H1 (cell line): ENCODE measurements at regions of chr19 and their contacts with region 1.

Region 1: DNA sequence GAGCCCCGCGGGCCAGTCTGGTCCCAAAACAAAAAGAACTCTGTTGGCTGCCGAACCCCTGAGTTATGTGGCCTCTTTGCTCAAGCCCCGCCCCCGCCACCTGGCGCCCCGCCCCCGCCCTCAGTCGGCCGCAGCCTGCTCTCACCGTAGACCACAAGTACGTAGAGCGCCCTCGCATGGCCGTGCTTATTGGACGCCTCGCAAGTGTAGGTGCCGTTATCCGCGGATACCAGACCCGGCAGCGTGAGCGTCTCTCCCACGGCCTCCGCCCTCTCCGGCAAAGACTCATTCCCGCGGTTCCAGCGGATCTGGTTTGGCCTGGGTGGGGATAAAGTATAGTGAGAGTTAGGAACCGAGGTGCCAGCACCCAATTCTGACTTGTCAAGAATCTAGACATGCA is 5.5 kb upstream of the ZNF428 start:
- DNase-seq: peak in 1 of 2 experiments; percentile 96
- H3K4me3 ChIP-seq: no peak overlapping the region
- H3K27ac ChIP-seq: no peak overlapping the region
- H3K4me1 ChIP-seq: peaks cover 2 to 9% (median 8%) of the 10 kb centered on the region in 4 experiments; a peak in 5 of 7 replicates
- H3K27me3 ChIP-seq: no peaks in the 10 kb centered on the region
- CTCF ChIP-seq: peak; percentile 68 to 91 (median 78)
- EP300 ChIP-seq: no peak
- POLR2A ChIP-seq: no peak
- RAD21 ChIP-seq: peak; percentile 48 to 65

Region 2: DNA sequence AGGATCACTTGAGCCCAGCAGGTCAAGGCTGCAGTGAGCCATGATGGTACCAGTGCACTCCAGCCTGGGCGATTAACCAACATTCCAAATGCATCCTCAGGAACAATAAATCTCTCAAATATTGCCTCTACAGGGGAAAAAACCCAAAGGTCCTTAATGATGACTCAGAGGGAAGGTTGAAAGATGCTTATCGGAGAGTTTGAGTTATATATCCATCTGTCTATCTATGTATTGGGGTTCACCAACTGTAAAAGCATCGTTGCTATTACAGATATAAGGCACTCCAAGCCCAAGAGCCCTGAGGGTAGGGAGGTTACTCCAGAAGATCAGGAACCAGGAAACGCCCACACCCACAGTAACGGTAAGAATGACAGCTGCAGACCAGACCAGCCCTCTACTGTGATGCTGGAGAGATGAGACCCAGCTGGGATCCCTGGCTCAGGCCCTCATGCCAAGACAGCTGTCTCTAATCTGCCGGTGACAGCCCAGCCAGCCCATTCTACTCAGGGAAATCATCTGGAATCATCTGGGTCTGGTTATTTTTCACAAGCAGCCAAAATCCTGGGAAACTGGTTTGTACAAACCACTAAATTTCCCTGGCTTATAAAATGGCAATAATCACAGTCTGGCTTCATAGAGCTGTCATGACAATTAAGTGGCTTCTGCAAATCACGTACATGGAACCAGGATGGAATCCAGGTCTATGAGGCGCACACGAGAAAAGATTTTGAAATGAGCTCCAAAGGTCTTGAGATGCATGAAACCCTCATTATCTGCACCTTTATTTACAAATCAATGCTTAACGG is 186.4 kb before region 1 on chr19:
- CTCF ChIA-PET with region 1: no interaction called
- POLR2A ChIA-PET with region 1: no interaction called
- DNase-seq: no peak
- H3K4me3 ChIP-seq: no peak overlapping the region
- H3K27ac ChIP-seq: no peak overlapping the region
- H3K4me1 ChIP-seq: no peaks in the 10 kb centered on the region
- H3K27me3 ChIP-seq: no peaks in the 10 kb centered on the region
- CTCF ChIP-seq: no peak
- EP300 ChIP-seq: no peak
- POLR2A ChIP-seq: no peak
- RAD21 ChIP-seq: no peak

Region 3: GRCh38 chr19:43555185-43555770 is 69.7 kb before region 1 on chr19:
- CTCF ChIA-PET with region 1: interaction called, 11 read pairs
- POLR2A ChIA-PET with region 1: no interaction called
- DNase-seq: peak; percentile 61 to 95
- H3K4me3 ChIP-seq: no peak overlapping the region
- H3K27ac ChIP-seq: no peak overlapping the region
- H3K4me1 ChIP-seq: 0 out of 7 replicates have a peak, but pooled peaks cover 0 to 2% (median 0%) of the 10 kb centered on the region in 4 experiments
- H3K27me3 ChIP-seq: no peaks in the 10 kb centered on the region
- CTCF ChIP-seq: peak; percentile 85 to 98 (median 93)
- EP300 ChIP-seq: no peak
- POLR2A ChIP-seq: no peak
- RAD21 ChIP-seq: peak; percentile 68 to 81

Region 4: GRCh38 chr19:43634872-43635560 is 10.1 kb after region 1 on chr19:
- CTCF ChIA-PET with region 1: interaction called, 22 read pairs
- POLR2A ChIA-PET with region 1: interaction called, 9 read pairs
- DNase-seq: peak in 1 of 2 experiments; percentile 68
- H3K4me3 ChIP-seq: peak overlapping the region; percentile 43 to 66 (median 59)
- H3K27ac ChIP-seq: no peak overlapping the region
- H3K4me1 ChIP-seq: peaks cover 9 to 25% (median 18%) of the 10 kb centered on the region in 4 experiments
- H3K27me3 ChIP-seq: peaks cover 5 to 28% (median 17%) of the 10 kb centered on the region in 4 experiments
- CTCF ChIP-seq: no peak
- EP300 ChIP-seq: no peak
- POLR2A ChIP-seq: peak in 1 of 2 experiments; percentile 28; a peak in 2 of 3 replicates
- RAD21 ChIP-seq: no peak

Region 5: GRCh38 chr19:43641333-43641732 is 16.4 kb after region 1 on chr19:
- CTCF ChIA-PET with region 1: interaction called, 22 read pairs
- POLR2A ChIA-PET with region 1: interaction called, 7 read pairs
- DNase-seq: no peak
- H3K4me3 ChIP-seq: no peak overlapping the region
- H3K27ac ChIP-seq: no peak overlapping the region
- H3K4me1 ChIP-seq: peaks cover 3 to 14% (median 10%) of the 10 kb centered on the region in 4 experiments; a peak in 6 of 7 replicates
- H3K27me3 ChIP-seq: peaks cover 11 to 48% (median 29%) of the 10 kb centered on the region in 4 experiments
- CTCF ChIP-seq: no peak
- EP300 ChIP-seq: no peak
- POLR2A ChIP-seq: no peak
- RAD21 ChIP-seq: no peak

Region 6: GRCh38 chr19:43651758-43652545 is 27.0 kb after region 1 on chr19:
- CTCF ChIA-PET with region 1: interaction called, 13 read pairs
- POLR2A ChIA-PET with region 1: no interaction called
- DNase-seq: peak in 1 of 2 experiments; percentile 80
- H3K4me3 ChIP-seq: no peak overlapping the region
- H3K27ac ChIP-seq: no peak overlapping the region
- H3K4me1 ChIP-seq: no peaks in the 10 kb centered on the region; a peak in 1 of 7 replicates
- H3K27me3 ChIP-seq: no peaks in the 10 kb centered on the region
- CTCF ChIP-seq: peak; percentile 84 to 92 (median 86)
- EP300 ChIP-seq: no peak
- POLR2A ChIP-seq: no peak
- RAD21 ChIP-seq: peak; percentile 81 to 87

Region 7: DNA sequence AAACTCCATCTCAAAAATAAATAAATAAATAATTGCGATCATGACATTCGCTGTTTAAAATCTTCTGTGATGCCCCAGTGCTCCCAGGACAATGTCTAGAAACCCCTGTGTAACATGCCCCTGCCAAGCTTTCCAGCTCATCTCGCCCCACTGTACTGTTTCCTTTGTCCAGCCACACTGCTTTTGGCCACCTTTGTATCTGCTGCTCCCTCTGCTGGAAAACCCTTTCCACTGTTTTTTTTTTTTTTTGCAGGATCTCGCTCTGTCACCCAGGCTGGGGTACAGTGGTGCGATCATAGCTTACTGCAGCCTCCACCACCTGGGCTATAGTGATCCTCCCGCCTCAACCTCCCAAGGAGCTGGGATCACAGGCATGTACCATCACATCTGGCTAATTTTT is 37.6 kb after region 1 on chr19:
- CTCF ChIA-PET with region 1: interaction called, 13 read pairs
- POLR2A ChIA-PET with region 1: interaction called, 3 read pairs
- DNase-seq: peak in 1 of 2 experiments; percentile 46
- H3K4me3 ChIP-seq: no peak overlapping the region
- H3K27ac ChIP-seq: no peak overlapping the region
- H3K4me1 ChIP-seq: peaks cover 0 to 6% (median 4%) of the 10 kb centered on the region in 4 experiments; a peak in 4 of 7 replicates
- H3K27me3 ChIP-seq: no peaks in the 10 kb centered on the region
- CTCF ChIP-seq: peak; percentile 27 to 57 (median 40)
- EP300 ChIP-seq: no peak
- POLR2A ChIP-seq: no peak
- RAD21 ChIP-seq: peak; percentile 28 to 41

Region 8: GRCh38 chr19:43687660-43687997 is 62.7 kb after region 1 on chr19:
- CTCF ChIA-PET with region 1: no interaction called
- POLR2A ChIA-PET with region 1: no interaction called
- DNase-seq: no peak
- H3K4me3 ChIP-seq: no peak overlapping the region
- H3K27ac ChIP-seq: no peak overlapping the region
- H3K4me1 ChIP-seq: peaks cover 0 to 2% (median 0%) of the 10 kb centered on the region in 4 experiments; a peak in 2 of 7 replicates
- H3K27me3 ChIP-seq: no peaks in the 10 kb centered on the region
- CTCF ChIP-seq: no peak
- EP300 ChIP-seq: no peak
- POLR2A ChIP-seq: no peak
- RAD21 ChIP-seq: no peak